Activated T-helper 1 cell treated with anti-CD3 and anti-CD28 coated beads, Interleukin-12 subunit alpha, Interleukin-12 subunit beta, Interleukin-2, Interleukin-4 antibody, amounts not matched to agents 30 ng/mL and 10 ng/mL and 1 ng/mL, durations not matched to agents 14 hours and 24 hours and 36 hours (primary cell): ENCODE measurements at regions of chr12 and their contacts with region 1.

Region 1: GRCh38 chr12:29148911-29149690 is at the start of gene FAR2:
- DNase-seq: peak; percentile 37
- H3K4me3 Mint-ChIP-seq: peak within 1 kb of the TSS; percentile 91
- H3K27ac Mint-ChIP-seq: peak within 1 kb of the TSS; percentile 93
- H3K4me1 Mint-ChIP-seq: peaks cover 17% of the 10 kb centered on the region
- H3K27me3 Mint-ChIP-seq: peaks cover 31% of the 10 kb centered on the region
- total RNA-seq, gene FAR2: 5.2 and 5.4 TPM in 2 replicates

Region 2: DNA sequence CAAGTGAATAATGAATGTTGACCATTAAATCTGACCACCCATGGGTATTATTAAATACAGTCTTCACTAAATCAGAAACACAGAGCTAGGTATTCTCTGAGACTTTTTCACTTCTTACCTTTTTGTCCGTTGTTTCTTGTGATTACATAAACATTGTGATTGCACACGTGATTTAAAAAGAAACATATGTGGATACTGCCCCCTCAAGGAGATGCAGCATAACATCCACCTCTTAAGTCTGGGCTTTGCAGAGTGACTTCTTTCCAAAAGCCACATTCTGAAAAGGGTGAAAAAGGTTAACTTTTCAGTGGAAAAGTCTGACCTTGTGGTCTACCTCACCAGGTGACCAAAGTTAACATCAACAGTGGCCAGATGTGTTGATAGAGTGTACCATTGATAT is 185.5 kb before region 1 on chr12:
- intact Hi-C with region 1: no loop called
- DNase-seq: no peak
- H3K4me3 Mint-ChIP-seq: no peak overlapping the region
- H3K27ac Mint-ChIP-seq: no peak overlapping the region
- H3K4me1 Mint-ChIP-seq: no peaks in the 10 kb centered on the region
- H3K27me3 Mint-ChIP-seq: peaks cover 3% of the 10 kb centered on the region

Region 3: DNA sequence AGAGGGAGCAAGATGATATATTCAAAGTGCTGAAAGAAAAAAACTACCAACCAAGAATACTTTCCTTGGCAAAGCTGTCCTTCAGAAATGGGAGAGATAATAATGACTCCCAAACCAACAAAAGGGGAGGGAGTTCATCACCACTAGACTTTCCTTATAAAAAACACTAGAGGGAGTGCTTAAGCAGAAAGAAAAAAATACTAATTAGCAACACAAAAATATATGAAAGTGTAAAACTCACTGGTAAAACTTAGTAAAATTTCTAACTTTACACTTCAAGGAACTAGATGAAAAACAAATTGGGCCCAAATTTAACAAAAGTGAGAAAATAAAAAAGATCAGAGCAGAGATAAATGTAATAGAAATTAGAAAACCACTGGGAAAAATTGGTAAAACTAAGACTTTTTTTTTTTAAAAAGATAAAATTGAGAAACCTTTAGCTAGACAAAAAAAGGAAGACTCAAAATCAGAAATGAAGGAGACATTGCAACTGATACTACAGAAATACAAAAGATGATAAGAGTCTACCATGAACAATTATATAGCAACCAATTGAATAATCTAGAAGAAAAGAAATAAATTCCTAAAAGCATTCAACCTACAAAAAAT is 60.4 kb before region 1 on chr12:
- intact Hi-C with region 1: loop called (anchors 5 kb)
- DNase-seq: no peak
- H3K4me3 Mint-ChIP-seq: no peak overlapping the region
- H3K27ac Mint-ChIP-seq: no peak overlapping the region
- H3K4me1 Mint-ChIP-seq: no peaks in the 10 kb centered on the region
- H3K27me3 Mint-ChIP-seq: peaks cover 36% of the 10 kb centered on the region

Region 4: DNA sequence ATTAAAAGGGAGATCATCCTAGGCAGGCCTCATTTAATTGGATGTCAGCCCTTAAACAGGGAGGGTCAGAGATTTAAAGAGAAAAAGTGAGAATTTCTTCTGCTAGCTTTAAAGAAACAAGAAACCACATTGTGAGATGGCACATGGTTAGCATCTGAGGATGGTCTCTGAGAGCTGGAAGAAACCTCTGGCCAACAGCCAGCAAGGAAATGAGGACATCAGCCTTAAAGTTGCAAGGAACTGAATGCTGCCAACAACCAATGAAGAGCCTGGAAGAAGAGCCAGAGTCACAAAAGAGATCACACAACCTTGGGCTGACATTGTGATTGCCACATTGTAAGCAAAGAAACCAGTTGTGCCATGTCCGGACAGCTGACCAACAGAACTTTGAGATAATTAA is 17.6 kb before region 1 on chr12:
- intact Hi-C with region 1: no loop called
- DNase-seq: no peak
- H3K4me3 Mint-ChIP-seq: no peak overlapping the region
- H3K27ac Mint-ChIP-seq: no peak overlapping the region
- H3K4me1 Mint-ChIP-seq: no peaks in the 10 kb centered on the region
- H3K27me3 Mint-ChIP-seq: peaks cover 6% of the 10 kb centered on the region

Region 5: GRCh38 chr12:29241821-29242591 is 92.9 kb after region 1 on chr12:
- intact Hi-C with region 1: loop called (anchors 5 kb)
- DNase-seq: no peak
- H3K4me3 Mint-ChIP-seq: no peak overlapping the region
- H3K27ac Mint-ChIP-seq: peak overlapping the region; percentile 21
- H3K4me1 Mint-ChIP-seq: peaks cover 22% of the 10 kb centered on the region
- H3K27me3 Mint-ChIP-seq: peaks cover 4% of the 10 kb centered on the region